ENCODE measurements at regions of chr1 and their contacts with region 1.

Region 1: GRCh38 chr1:156959414-156959813 is 39.0 kb downstream of the LRRC71 start:
- DNase-seq: peak in 2 of 4 experiments; percentile 43 to 44
- ATAC-seq: peak; percentile 56
- H3K4me3 ChIP-seq: no peak overlapping the region
- H3K27ac ChIP-seq: peak overlapping the region; percentile 23; the same call in 1 of the 3 replicates
- H3K4me1 ChIP-seq: peaks cover 15 to 41% of the 10 kb centered on the region in 2 experiments
- H3K27me3 ChIP-seq: no peaks in the 10 kb centered on the region
- CTCF ChIP-seq: no peak
- EP300 ChIP-seq: no peak
- POLR2A ChIP-seq: no peak
- RAD21 ChIP-seq: no peak

Region 2: GRCh38 chr1:156740679-156741612 is 218.5 kb before region 1 on chr1 and contains the start of gene MRPL24:
- CTCF ChIA-PET with region 1: no interaction called
- POLR2A ChIA-PET with region 1: no interaction called
- in situ Hi-C with region 1: no loop called
- intact Hi-C with region 1: no loop called
- DNase-seq: peak; percentile 81 to 99 (median 90)
- ATAC-seq: peak; percentile 95
- H3K4me3 ChIP-seq: peak within 1 kb of the TSS; percentile 63
- H3K27ac ChIP-seq: peak within 1 kb of the TSS; percentile 82
- H3K4me1 ChIP-seq: peaks cover 24 to 26% of the 10 kb centered on the region in 2 experiments
- H3K27me3 ChIP-seq: no peaks in the 10 kb centered on the region
- CTCF ChIP-seq: no peak; a peak in 1 of 6 replicates
- EP300 ChIP-seq: peak; percentile 31
- POLR2A ChIP-seq: peak; percentile 81
- RAD21 ChIP-seq: peak in 1 of 2 experiments; percentile 12; a peak in 1 of 4 replicates
- polyA plus RNA-seq, gene MRPL24: 206 to 267 TPM

Region 3: DNA sequence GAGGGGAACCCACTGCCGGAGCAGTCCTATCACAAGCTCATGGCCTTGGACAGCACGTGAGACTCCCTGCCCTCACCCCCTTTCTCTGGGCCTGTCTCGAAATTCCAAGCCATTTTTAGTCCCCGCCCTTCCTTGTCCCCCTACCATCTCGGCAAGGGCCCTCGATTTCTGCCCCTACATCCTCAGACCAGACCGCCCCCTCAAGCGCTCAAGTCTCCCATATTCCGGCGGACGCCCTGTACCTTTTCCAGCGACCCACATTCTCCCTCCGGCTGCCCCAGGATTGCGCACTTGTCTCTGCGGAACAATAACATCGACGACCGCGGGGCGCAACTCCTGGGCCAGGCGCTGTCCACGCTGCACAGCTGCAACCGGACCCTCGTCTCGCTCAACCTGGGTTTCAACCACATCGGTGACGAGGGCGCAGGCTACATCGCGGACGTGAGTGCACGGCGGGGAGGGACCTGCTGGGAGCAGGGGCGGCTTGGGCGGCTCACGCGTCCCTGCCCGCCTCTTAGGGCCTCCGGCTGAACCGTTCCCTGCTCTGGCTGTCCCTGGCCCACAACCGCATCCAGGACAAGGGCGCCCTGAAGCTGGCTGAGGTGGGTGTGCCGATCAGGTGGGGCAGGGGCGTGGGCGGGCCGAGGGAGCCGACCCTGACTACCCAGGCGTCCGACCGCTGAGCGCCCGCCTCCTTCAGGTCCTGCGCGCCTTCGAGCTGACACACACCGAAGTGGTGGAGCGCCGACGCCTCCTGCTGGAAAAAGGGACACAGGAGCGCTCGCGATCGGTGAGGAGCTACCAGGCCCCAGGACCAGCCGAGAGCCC is 32.0 kb before region 1 on chr1:
- CTCF ChIA-PET with region 1: no interaction called
- POLR2A ChIA-PET with region 1: no interaction called
- in situ Hi-C with region 1: no loop called
- intact Hi-C with region 1: loop called (anchors 2 kb)
- DNase-seq: peak; percentile 74 to 87 (median 78)
- ATAC-seq: peak; percentile 87
- H3K4me3 ChIP-seq: peak overlapping the region; percentile 30; the same call in 1 of the 2 replicates
- H3K27ac ChIP-seq: no peak overlapping the region; the same call in 2 of the 3 replicates
- H3K4me1 ChIP-seq: peaks cover 24 to 33% of the 10 kb centered on the region in 2 experiments
- H3K27me3 ChIP-seq: peaks cover 5 to 6% of the 10 kb centered on the region in 2 experiments; a peak in 2 of 5 replicates
- CTCF ChIP-seq: peak; percentile 77 to 92 (median 81)
- EP300 ChIP-seq: no peak
- POLR2A ChIP-seq: no peak
- RAD21 ChIP-seq: peak; percentile 77 to 78

Region 4: GRCh38 chr1:156970017-156970416 is 10.6 kb after region 1 on chr1:
- CTCF ChIA-PET with region 1: no interaction called
- POLR2A ChIA-PET with region 1: interaction called, 26 read pairs
- in situ Hi-C with region 1: no loop called
- intact Hi-C with region 1: no loop called
- DNase-seq: peak in 2 of 4 experiments; percentile 16 to 22
- ATAC-seq: peak; percentile 76
- H3K4me3 ChIP-seq: no peak overlapping the region
- H3K27ac ChIP-seq: no peak overlapping the region
- H3K4me1 ChIP-seq: peaks cover 0 to 3% of the 10 kb centered on the region in 2 experiments; a peak in 1 of 5 replicates
- H3K27me3 ChIP-seq: no peaks in the 10 kb centered on the region
- CTCF ChIP-seq: peak; percentile 15 to 51 (median 45); a peak in 3 of 6 replicates
- EP300 ChIP-seq: no peak
- POLR2A ChIP-seq: no peak
- RAD21 ChIP-seq: peak; percentile 32 to 59

Region 5: GRCh38 chr1:157000686-157001085 is 41.3 kb after region 1 on chr1:
- CTCF ChIA-PET with region 1: no interaction called
- POLR2A ChIA-PET with region 1: no interaction called
- in situ Hi-C with region 1: no loop called
- intact Hi-C with region 1: loop called (anchors 2 kb)
- DNase-seq: no peak
- ATAC-seq: no peak
- H3K4me3 ChIP-seq: no peak overlapping the region
- H3K27ac ChIP-seq: no peak overlapping the region
- H3K4me1 ChIP-seq: peaks cover 20 to 28% of the 10 kb centered on the region in 2 experiments
- H3K27me3 ChIP-seq: no peaks in the 10 kb centered on the region
- CTCF ChIP-seq: no peak
- EP300 ChIP-seq: no peak
- POLR2A ChIP-seq: no peak
- RAD21 ChIP-seq: no peak

Region 6: DNA sequence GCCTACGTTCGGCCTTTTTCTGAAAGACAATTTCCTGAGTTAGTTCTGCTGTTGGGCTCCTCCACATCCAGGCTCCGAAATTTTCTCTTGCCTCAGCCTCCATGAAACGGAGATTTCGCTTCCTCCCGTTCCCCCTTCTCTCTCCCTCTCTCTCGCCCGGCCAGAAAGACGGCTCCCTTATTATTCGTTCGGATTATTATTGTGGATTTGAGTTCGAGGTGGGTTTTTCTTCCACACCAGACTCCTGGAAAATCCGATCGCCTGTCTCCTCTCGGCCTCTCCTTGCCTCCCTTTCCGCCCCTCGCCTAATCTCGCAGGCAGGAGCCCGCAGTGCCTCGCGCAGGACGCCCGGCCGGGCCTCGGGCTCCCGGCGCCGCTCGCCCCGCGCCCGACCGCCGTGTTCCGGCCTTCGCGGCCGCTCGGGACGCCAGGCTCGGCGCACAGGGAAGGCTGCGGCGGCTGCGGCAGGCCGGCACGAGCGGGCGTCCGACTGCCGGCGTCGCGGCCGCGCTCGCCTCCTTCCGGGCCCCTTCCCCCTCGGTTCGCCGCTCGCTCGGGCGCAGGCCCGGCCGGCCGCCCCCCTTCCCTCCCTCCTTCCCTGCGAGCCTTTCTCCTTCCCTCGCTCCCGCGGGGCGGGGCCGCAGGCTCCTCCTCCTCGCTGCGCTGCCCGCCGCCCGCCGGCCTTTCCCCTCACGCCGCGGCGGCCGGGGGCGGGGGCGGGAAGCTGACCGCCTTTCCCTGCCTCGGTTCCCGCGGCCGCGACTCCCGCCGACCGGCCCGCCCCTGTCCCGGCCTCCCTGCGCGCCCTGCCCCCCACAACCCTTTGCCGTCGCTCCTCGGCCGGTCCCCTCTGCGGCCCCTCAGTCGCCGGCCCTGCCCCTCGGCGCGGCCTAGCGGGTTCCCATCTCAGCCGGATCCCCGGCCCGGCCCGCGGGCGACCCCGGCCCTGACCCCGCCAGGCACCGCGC is 86.1 kb after region 1 on chr1 and contains the start of gene ARHGEF11:
- CTCF ChIA-PET with region 1: no interaction called
- POLR2A ChIA-PET with region 1: interaction called, 3 read pairs
- in situ Hi-C with region 1: no loop called
- intact Hi-C with region 1: loop called (anchors 1 kb)
- DNase-seq: peak; percentile 91 to 95 (median 93)
- ATAC-seq: peak; percentile 96
- H3K4me3 ChIP-seq: peak within 1 kb of the TSS; percentile 49
- H3K27ac ChIP-seq: peak within 1 kb of the TSS; percentile 61
- H3K4me1 ChIP-seq: peaks cover 24 to 36% of the 10 kb centered on the region in 2 experiments
- H3K27me3 ChIP-seq: no peaks in the 10 kb centered on the region
- CTCF ChIP-seq: no peak
- EP300 ChIP-seq: 0 out of 2 replicates have a peak, but pooled peaks have one; percentile 8
- POLR2A ChIP-seq: no peak; the same call in 1 of the 2 replicates
- RAD21 ChIP-seq: no peak
- polyA plus RNA-seq, gene ARHGEF11: 0.14 to 0.48 TPM

Measured in K562 (cell line).